Astrocyte of the cerebellum (primary cell): ENCODE measurements at regions of chr14 and their contacts with region 1.

Region 1: GRCh38 chr14:25911831-25912230 is 686.0 kb downstream of the NOVA1 start:
- DNase-seq: no peak
- H3K4me3 ChIP-seq: no peak overlapping the region
- CTCF ChIP-seq: no peak

Region 2: DNA sequence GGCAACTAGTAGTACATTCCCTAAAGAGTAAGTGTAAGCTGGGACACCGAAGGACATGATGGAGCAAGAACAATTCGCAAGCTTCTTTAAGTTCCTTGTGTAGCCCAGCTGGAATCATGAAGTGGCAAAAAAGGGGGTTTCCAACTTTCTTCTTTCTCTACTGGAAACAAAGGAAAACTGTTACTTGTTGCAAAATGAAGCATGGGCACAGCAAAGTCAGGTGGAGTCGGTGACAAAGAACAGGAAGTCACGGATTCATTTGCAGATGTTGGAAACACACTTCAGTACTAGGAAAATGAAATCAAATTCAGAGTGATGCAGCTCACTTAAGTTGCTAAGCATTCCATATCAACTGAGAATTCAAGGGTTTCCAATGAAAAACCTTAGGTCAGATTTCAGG is 155.0 kb before region 1 on chr14:
- in situ Hi-C with region 1: no loop called
- DNase-seq: no peak
- H3K4me3 ChIP-seq: no peak overlapping the region
- CTCF ChIP-seq: no peak

Region 3: DNA sequence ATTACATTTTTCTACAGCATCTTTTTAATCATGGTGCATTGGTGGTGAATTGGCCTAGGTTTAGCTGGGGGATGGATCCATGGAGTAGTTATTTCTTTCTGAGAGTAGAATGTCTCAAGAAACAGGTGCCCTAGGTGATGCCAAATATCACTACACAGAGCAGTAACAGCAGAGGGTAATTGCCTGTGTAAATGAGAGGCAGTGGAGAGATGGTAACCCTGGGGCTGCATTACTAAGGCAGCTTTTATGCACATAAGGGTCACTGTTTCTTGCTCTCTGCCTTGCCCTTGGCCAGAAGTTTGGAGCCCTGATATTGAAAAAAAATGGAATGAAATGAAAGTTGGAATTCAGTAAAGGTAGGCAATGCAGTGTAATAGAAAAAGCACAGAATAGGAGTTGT is 82.0 kb after region 1 on chr14:
- in situ Hi-C with region 1: loop called (anchors 5 kb)
- DNase-seq: no peak
- H3K4me3 ChIP-seq: no peak overlapping the region
- CTCF ChIP-seq: no peak